ENCODE measurements at regions of chr11 and their contacts with region 1.

Region 1: DNA sequence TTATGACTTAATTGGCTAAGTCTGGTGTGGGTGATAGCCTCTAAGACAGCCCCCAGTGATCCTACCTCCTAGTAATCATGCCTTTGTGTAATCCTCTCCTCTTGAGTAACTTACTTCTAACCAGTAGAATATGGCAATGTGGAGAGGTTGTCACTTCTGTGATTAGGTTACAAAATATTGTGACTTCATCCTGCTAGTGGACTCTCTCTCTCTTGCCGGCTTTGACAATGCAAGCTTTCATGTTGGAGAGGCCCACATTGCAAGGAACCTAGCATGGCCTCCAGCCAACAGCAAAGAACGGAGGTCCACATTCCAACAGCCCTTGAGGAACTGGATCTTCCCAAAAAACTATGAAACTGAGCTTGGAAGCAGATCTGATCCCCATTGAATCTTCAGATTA is 19.5 kb downstream of the YPEL4 start:
- DNase-seq: no peak
- H3K4me3 ChIP-seq: no peak overlapping the region
- H3K27ac ChIP-seq: no peak overlapping the region
- H3K4me1 ChIP-seq: peaks cover 17% of the 10 kb centered on the region
- H3K27me3 ChIP-seq: no peaks in the 10 kb centered on the region
- CTCF ChIP-seq: no peak

Region 2: GRCh38 chr11:57584341-57584740 is 45.9 kb before region 1 on chr11:
- CTCF ChIA-PET with region 1: no interaction called
- dilution Hi-C with region 1: loop called (anchors 5 kb)
- in situ Hi-C with region 1: loop called in 1 of 2 experiments (anchors 5 kb)
- intact Hi-C with region 1: no loop called
- DNase-seq: no peak
- H3K4me3 ChIP-seq: no peak overlapping the region
- H3K27ac ChIP-seq: no peak overlapping the region
- H3K4me1 ChIP-seq: no peaks in the 10 kb centered on the region
- H3K27me3 ChIP-seq: peaks cover 1% of the 10 kb centered on the region
- CTCF ChIP-seq: no peak

Region 3: DNA sequence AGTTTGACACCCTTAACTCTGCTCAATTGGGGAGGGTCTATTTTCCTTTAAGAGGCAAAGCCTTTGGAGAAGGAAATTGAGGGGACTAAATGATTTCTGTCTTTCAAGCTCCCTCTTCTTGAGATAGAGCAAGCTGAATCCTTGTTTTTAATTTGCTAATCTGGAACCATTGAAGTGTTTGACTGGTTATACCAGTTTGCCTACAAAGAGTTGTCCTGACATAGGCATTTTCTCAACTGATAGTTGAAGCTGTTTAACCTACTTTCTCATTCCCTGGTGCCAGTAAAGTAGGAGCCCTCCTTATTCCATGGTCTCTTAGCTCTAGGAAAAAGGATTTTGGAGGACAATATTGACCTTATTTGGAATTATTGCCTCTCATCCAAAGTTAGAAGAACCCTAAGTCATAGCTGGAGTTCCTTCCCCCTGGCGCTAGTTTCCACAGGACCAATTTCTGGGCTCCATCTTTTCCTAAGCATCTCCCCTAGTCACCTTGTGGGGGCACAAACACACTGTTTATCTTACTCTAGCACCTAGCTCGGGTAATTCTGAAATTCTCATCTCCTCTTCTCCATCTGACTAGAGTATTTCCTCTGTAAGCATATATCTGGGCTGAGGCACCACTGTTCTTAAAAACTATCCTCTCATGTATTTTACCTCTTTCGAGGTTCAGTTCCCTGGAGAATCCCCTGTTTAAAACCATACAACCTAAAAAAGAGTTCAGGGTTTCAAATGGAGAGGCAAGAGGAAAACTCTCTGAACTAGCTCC is 45.2 kb after region 1 on chr11:
- CTCF ChIA-PET with region 1: no interaction called
- dilution Hi-C with region 1: no loop called
- in situ Hi-C with region 1: no loop called
- intact Hi-C with region 1: no loop called
- DNase-seq: no peak
- H3K4me3 ChIP-seq: no peak overlapping the region
- H3K27ac ChIP-seq: no peak overlapping the region
- H3K4me1 ChIP-seq: peaks cover 24% of the 10 kb centered on the region
- H3K27me3 ChIP-seq: no peaks in the 10 kb centered on the region
- CTCF ChIP-seq: no peak

Region 4: GRCh38 chr11:57800444-57801182 is 170.4 kb after region 1 on chr11:
- CTCF ChIA-PET with region 1: no interaction called
- dilution Hi-C with region 1: no loop called
- in situ Hi-C with region 1: no loop called
- intact Hi-C with region 1: no loop called
- DNase-seq: peak; percentile 86
- H3K4me3 ChIP-seq: no peak overlapping the region
- H3K27ac ChIP-seq: peak overlapping the region; percentile 84
- H3K4me1 ChIP-seq: peaks cover 30% of the 10 kb centered on the region
- H3K27me3 ChIP-seq: no peaks in the 10 kb centered on the region
- CTCF ChIP-seq: peak; percentile 74 to 80

Measured in mammary epithelial cell (primary cell).